ENCODE measurements at regions of chr10 and their contacts with region 1.

Region 1: DNA sequence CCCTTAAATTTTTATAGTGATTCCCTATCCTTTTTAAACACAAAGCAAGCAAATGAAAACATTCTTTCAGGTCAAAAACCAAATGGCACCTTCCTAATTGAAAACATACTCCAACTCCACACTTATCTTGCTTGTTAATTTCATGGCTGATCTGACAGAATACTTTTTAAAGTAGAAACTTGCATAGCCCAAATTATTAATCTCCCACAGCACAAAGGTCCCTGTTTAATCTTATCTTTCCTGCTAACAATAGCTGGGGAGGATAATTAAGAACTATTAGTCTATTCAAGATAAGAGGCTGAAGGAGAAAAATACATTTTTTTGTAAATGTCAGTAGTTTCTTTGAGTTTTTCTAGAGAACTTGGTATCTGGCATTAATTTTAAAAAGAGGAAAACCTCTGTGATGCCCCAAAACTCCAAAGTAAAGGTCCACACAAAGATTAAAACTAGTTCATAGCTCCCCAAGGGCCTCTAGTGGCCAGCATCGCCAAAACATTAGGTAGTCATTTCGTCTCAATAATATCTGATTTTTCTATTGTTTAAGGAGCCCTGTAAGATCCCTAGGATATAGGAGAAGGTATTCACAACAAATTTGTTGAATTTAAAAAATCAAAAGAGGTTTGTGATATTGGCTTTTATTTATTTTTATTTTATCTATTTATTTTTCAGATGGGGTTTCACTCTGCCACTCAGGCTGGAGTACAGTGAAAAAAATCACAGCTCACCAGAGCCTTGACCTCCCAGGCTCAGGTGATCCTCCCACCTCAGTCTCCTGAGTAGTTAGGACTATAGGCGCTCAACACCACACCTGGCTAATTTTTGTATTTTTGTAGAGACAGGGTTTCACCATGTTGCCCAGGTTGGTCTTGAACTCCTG is 14.7 kb downstream of the CDNF start:
- DNase-seq: peak in 1 of 2 donors; percentile 23
- ATAC-seq: peak in 3 of 8 donors; percentile 49 to 51 (median 49)
- H3K4me3 ChIP-seq: no peak overlapping the region
- H3K27ac ChIP-seq: no peak overlapping the region
- H3K4me1 ChIP-seq: peaks cover 0 to 8% (median 0%) of the 10 kb centered on the region in 9 donors
- H3K27me3 ChIP-seq: no peaks in the 10 kb centered on the region
- CTCF ChIP-seq: peak; percentile 22 to 77 (median 66)

Region 2: GRCh38 chr10:14191871-14192270 is 631.2 kb before region 1 on chr10:
- intact Hi-C with region 1: loop called in 1 of 10 experiments (anchors 5 kb)
- DNase-seq: no peak
- ATAC-seq: no peak
- H3K4me3 ChIP-seq: no peak overlapping the region
- H3K27ac ChIP-seq: no peak overlapping the region
- H3K4me1 ChIP-seq: no peaks in the 10 kb centered on the region
- H3K27me3 ChIP-seq: peaks cover 0 to 41% (median 13%) of the 10 kb centered on the region in 7 donors
- CTCF ChIP-seq: no peak

Region 3: DNA sequence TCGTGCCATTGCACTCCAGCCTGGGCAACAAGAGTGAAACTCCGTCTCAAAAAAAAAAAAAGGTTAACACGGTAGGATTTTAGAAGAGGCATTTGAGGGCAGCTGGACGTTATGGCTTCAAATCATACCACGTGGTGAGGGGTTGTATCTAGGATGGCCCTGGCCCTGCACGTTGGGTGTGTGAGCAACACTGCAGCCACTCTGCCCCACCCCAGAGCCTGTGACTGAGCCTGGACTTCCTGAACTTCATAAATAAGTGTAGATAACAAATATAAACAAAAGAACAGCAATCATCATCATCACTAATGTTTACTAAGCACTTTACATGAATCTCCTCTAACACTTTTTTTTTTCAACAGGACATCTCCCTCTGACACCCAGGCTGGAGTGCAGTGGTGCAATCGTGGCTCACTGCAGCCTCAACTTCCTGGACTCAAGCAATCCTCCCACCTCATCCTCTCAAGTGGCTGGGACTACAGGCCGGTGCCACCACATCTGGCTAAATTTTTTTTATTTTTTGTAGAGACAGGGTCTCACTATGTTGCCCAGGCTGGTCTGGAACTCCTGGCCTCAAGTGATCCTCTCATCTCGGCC is 322.8 kb before region 1 on chr10:
- intact Hi-C with region 1: loop called in 7 of 10 experiments (anchors 5 to 10 kb)
- DNase-seq: no peak
- ATAC-seq: no peak
- H3K4me3 ChIP-seq: no peak overlapping the region
- H3K27ac ChIP-seq: no peak overlapping the region
- H3K4me1 ChIP-seq: peaks cover 0 to 9% (median 0%) of the 10 kb centered on the region in 9 donors
- H3K27me3 ChIP-seq: peaks cover 0 to 3% (median 0%) of the 10 kb centered on the region in 7 donors
- CTCF ChIP-seq: no peak

Region 4: DNA sequence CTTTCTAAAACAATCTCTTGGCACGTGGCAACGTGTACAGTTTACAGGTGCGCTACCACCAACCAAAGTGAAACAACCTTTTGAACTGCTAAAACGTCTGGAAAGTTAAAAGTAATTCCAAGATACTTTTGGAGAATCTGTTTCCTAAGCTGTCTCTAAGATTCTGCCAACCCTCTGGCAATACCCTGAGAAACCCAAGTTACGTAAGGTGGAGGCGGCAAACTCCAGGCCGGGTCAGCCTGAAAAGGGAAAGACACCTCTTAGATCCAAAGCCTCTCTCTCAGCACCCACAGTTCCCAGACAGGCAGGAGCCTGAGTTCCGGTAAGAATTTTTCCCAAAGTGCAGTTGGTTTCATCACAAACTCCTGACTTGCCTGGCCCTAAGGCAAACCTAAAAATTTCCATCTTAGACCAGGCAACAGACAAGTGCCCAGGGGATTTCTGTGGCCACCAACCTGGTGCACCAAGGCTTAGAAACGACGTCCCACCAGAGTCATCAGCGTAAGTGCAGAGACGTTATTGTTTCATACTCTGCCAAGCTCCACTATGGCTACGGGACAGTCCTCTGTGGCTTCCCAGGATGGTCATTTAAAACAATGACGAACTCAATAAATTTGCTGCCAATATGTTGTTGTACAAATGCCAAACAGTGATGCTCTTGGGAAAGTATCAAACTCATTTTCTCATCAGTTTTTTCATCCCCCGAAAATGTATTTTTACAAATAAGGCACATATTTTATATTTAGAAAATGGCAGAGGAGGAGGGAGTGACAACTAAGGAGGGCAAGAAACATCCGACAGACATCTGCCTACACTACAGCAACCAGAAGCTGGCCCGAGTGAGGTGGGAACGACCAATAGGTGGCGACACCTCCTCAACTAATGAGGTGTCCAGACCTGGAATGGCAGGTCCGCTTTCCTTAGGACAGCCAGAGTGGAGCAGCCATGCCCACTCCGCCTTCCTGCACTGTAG is 286.6 kb before region 1 on chr10:
- intact Hi-C with region 1: loop called in 9 of 10 experiments (anchors 5 to 10 kb)
- DNase-seq: peak; percentile 69 to 82
- ATAC-seq: peak; percentile 72 to 91 (median 88)
- H3K4me3 ChIP-seq: no peak overlapping the region
- H3K27ac ChIP-seq: peak overlapping the region in 2 of 10 donors; percentile 41 to 50
- H3K4me1 ChIP-seq: peaks cover 0 to 21% (median 7%) of the 10 kb centered on the region in 9 donors
- H3K27me3 ChIP-seq: no peaks in the 10 kb centered on the region
- CTCF ChIP-seq: peak; percentile 31 to 78 (median 70)

Region 5: DNA sequence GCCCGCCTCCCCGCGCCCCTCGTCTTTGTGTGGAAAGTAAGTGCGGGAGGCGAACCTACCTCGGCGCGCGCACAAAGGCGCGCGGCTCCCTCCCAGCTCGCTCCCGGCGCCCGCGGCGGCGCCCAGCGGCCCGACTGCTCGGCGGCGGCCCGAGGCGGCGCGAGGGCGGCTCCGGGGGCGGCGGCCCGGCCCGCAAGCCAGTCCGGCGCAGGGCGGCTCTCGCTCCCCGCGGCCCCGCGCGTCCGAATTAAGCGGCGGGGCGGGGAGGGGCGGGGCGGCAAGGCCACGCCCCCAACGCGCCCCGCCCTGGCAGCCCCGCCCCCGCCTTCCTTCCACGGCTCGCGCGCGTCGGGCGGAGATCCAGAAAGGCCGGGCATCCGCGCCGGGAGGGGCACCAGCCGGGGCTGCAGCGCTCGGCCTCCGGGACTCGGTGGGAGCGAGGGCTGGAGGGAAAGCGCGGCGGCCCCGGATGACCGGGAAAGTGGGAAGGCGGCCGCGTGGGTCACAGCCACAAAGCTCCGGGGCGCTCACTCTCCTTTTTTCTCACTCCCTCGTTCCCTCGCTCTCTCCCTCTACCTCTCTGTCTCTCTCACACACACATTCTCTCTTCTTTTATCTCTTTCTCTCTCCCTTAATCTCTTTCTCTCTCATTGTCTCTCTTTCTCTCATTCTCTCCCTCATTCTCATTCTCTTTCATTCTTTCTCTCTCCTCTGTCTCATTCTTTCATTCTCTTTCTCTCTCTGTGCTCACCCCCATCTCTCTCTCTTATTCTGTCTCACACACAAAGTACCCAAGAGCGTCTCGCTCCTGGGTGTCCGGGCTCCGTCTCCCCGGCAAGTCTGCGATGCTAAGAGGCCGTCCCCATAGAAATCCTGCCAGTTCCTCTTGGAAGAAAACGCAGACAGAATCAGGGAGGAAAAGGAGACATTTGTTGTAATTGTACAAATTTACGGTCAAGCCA is 218.7 kb before region 1 on chr10:
- intact Hi-C with region 1: loop called in 1 of 10 experiments (anchors 10 kb)
- DNase-seq: peak; percentile 79 to 90
- ATAC-seq: peak; percentile 92 to 98 (median 95)
- H3K4me3 ChIP-seq: peak overlapping the region; percentile 47 to 76 (median 64)
- H3K27ac ChIP-seq: peak overlapping the region in 7 of 10 donors; percentile 11 to 92 (median 70)
- H3K4me1 ChIP-seq: peaks cover 4 to 56% (median 20%) of the 10 kb centered on the region in 9 donors
- H3K27me3 ChIP-seq: no peaks in the 10 kb centered on the region
- CTCF ChIP-seq: no peak